CD4-positive, alpha-beta memory T cell (primary cell): ENCODE measurements at regions of chr10 and their contacts with region 1.

Region 1: GRCh38 chr10:4839401-4839800 is 13.4 kb downstream of the AKR1E2 start:
- DNase-seq: no peak
- H3K4me3 ChIP-seq: no peak overlapping the region
- H3K4me3 Mint-ChIP-seq: no peak overlapping the region
- H3K27ac ChIP-seq: no peak overlapping the region
- H3K27ac Mint-ChIP-seq: peak overlapping the region in 3 of 7 donors; percentile 0 to 71 (median 32)
- H3K4me1 ChIP-seq: peaks cover 35% of the 10 kb centered on the region
- H3K4me1 Mint-ChIP-seq: peaks cover 19 to 31% (median 25%) of the 10 kb centered on the region in 4 donors
- H3K27me3 ChIP-seq: no peaks in the 10 kb centered on the region
- H3K27me3 Mint-ChIP-seq: no peaks in the 10 kb centered on the region

Region 2: DNA sequence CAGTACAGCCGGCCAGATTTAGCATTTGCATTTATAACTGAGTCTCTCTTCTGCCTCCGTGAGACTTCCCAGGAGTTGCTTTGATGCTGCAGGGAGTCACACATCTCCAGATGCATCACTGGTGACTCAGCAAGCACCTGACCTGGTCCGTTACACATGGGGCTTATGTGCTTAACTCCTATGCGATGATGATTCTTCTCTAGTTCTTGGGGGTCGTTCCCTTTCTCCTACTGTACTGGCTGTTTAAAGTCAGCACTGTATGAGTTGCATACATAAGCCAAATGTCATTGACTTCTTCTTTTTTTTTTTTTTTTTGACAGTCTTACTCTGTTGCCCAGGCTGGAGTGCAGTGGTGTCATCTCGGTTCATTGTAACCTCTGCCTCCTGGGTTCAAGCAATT is 26.4 kb before region 1 on chr10:
- CTCF ChIA-PET with region 1: interaction called, 41 read pairs
- POLR2A ChIA-PET with region 1: no interaction called
- intact Hi-C with region 1: loop called (anchors 2 kb)
- DNase-seq: no peak
- H3K4me3 ChIP-seq: no peak overlapping the region
- H3K4me3 Mint-ChIP-seq: no peak overlapping the region
- H3K27ac ChIP-seq: no peak overlapping the region
- H3K27ac Mint-ChIP-seq: no peak overlapping the region
- H3K4me1 ChIP-seq: peaks cover 6% of the 10 kb centered on the region
- H3K4me1 Mint-ChIP-seq: no peaks in the 10 kb centered on the region
- H3K27me3 ChIP-seq: no peaks in the 10 kb centered on the region
- H3K27me3 Mint-ChIP-seq: peaks cover 11 to 13% of the 10 kb centered on the region in 2 donors

Region 3: GRCh38 chr10:4820804-4821401 is 18.5 kb before region 1 on chr10:
- CTCF ChIA-PET with region 1: interaction called, 17 read pairs
- POLR2A ChIA-PET with region 1: interaction called, 29 read pairs
- intact Hi-C with region 1: loop called (anchors 2 kb)
- DNase-seq: no peak
- H3K4me3 ChIP-seq: no peak overlapping the region
- H3K4me3 Mint-ChIP-seq: no peak overlapping the region
- H3K27ac ChIP-seq: no peak overlapping the region
- H3K27ac Mint-ChIP-seq: no peak overlapping the region
- H3K4me1 ChIP-seq: no peaks in the 10 kb centered on the region
- H3K4me1 Mint-ChIP-seq: peaks cover 2 to 4% (median 2%) of the 10 kb centered on the region in 4 donors
- H3K27me3 ChIP-seq: no peaks in the 10 kb centered on the region
- H3K27me3 Mint-ChIP-seq: peaks cover 5 to 24% of the 10 kb centered on the region in 2 donors

Region 4: DNA sequence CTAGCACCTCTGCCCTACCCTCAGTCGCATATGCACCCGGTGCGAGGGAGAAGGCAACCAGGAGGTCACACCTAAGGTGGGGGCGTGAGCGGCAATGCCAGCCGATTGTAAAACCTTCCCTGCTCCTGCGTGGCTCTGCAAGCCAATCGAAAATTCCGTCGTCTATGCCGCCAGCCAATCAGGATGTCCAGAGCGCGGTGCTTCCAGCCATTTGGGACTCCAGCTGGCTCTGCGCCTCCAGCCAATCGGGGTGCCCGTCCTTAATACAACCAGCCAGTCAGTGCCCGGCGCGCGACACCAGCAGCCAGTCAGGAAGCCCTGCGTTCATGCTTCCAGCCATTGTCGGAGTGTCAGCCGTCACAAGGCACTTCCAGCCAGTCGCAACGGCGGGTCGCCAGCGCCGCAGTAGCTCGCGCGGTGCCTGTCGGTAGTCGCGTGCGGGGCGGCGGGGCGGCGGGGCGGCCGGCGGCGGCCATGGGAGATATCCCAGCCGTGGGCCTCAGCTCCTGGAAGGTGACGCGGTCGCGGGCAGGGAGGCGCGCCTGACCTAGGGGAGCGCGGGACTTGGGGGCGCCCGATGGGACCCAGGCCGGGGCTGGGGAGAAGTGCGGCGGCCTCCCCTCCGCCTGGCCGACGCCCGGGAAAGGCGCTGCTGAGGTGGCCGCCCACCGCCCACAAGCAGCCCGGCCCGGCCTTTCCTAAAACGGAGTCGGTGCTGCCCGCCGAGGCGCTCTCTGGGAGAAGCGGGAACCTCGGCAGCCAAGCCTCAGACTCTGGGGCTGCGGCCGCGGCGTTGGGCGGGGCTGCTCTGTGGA is 13.3 kb before region 1 on chr10 and contains the start of gene AKR1E2:
- CTCF ChIA-PET with region 1: interaction called, 17 read pairs
- POLR2A ChIA-PET with region 1: interaction called, 29 read pairs
- intact Hi-C with region 1: no loop called
- DNase-seq: peak; percentile 80 to 88 (median 87)
- H3K4me3 ChIP-seq: peak within 1 kb of the TSS in 1 of 2 donors; percentile 36
- H3K4me3 Mint-ChIP-seq: peak within 1 kb of the TSS; percentile 71 to 86 (median 83)
- H3K27ac ChIP-seq: peak within 1 kb of the TSS; percentile 32
- H3K27ac Mint-ChIP-seq: peak within 1 kb of the TSS; percentile 65 to 95 (median 89)
- H3K4me1 ChIP-seq: no peaks in the 10 kb centered on the region
- H3K4me1 Mint-ChIP-seq: peaks cover 7 to 25% (median 10%) of the 10 kb centered on the region in 4 donors
- H3K27me3 ChIP-seq: no peaks in the 10 kb centered on the region
- H3K27me3 Mint-ChIP-seq: peaks cover 9 to 20% of the 10 kb centered on the region in 2 donors
- total RNA-seq, gene AKR1E2: 9.2 to 9.8 TPM